Cardiac septum (tissue), 1 donor: ENCODE measurements at regions of chr5 and their contacts with region 1.

Region 1: GRCh38 chr5:153964880-153965645 is 73.6 kb downstream of the FAM114A2 start:
- DNase-seq: no peak

Region 2: DNA sequence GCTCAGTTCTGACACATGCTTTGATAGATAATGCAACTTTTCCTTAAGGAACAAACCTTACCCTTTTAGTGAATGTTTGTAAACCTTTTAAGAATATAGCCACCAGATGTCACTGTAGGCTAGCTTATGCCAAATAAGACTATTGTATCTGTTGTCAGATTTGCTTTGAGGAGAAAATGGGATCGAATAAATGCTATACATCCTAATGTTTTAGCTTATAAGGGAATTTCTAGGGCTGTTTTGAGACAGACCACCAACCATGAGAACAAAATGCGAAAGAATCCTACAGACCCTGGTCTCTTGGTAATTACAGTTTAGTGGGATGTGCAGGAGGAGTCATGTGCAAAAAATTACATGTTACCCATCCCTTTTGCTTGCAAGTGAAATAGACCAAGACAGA is 1432.3 kb before region 1 on chr5:
- intact Hi-C with region 1: loop called (anchors 5 kb)
- DNase-seq: no peak